B cell (primary cell): ENCODE measurements at regions of chr3 and their contacts with region 1.

Region 1: DNA sequence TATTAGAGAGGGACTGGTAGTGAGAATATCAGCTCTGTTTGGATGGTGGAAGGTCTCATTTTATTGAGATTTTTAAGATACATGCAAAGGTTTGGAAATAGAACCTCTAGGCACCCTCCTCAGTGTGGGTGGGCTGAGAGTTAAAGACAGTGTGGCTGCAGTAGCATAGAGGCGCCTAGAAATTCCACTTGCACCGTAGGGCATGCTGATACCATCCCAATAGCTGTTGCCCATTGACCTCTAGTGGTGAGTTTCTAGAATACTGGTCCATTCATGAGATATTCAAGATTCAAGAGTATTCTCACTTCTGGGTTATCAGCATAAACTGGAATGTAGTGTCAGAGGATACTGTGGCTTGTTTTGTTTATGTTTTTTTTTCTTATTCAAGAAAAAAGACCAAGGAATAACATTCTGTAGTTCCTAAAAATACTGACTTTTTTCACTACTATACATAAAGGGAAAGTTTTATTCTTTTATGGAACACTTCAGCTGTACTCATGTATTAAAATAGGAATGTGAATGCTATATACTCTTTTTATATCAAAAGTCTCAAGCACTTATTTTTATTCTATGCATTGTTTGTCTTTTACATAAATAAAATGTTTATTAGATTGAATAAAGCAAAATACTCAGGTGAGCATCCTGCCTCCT is 87.2 kb downstream of the TGFBR2 start:
- DNase-seq: peak; percentile 77
- ATAC-seq: peak; percentile 87
- H3K4me3 ChIP-seq: no peak overlapping the region
- H3K4me3 Mint-ChIP-seq: no peak overlapping the region
- H3K27ac ChIP-seq: peak overlapping the region in 1 of 2 donors; percentile 48
- H3K27ac Mint-ChIP-seq: peak overlapping the region; percentile 80
- H3K4me1 ChIP-seq: peaks cover 29 to 32% of the 10 kb centered on the region in 2 donors
- H3K4me1 Mint-ChIP-seq: peaks cover 74% of the 10 kb centered on the region
- H3K27me3 ChIP-seq: no peaks in the 10 kb centered on the region
- H3K27me3 Mint-ChIP-seq: no peaks in the 10 kb centered on the region
- CTCF ChIP-seq: peak; percentile 96

Region 2: GRCh38 chr3:30042274-30042859 is 651.2 kb before region 1 on chr3:
- CTCF ChIA-PET with region 1: interaction called, 39 read pairs
- POLR2A ChIA-PET with region 1: no interaction called
- intact Hi-C with region 1: loop called (anchors 1 kb)
- DNase-seq: peak; percentile 65
- ATAC-seq: peak; percentile 33
- H3K4me3 ChIP-seq: no peak overlapping the region
- H3K4me3 Mint-ChIP-seq: no peak overlapping the region
- H3K27ac ChIP-seq: no peak overlapping the region
- H3K27ac Mint-ChIP-seq: no peak overlapping the region
- H3K4me1 ChIP-seq: no peaks in the 10 kb centered on the region
- H3K4me1 Mint-ChIP-seq: peaks cover 2% of the 10 kb centered on the region
- H3K27me3 ChIP-seq: no peaks in the 10 kb centered on the region
- H3K27me3 Mint-ChIP-seq: peaks cover 14% of the 10 kb centered on the region
- CTCF ChIP-seq: peak; percentile 85

Region 3: GRCh38 chr3:30199096-30199759 is 494.4 kb before region 1 on chr3:
- CTCF ChIA-PET with region 1: interaction called, 113 read pairs
- POLR2A ChIA-PET with region 1: no interaction called
- intact Hi-C with region 1: loop called (anchors 1 kb)
- DNase-seq: peak; percentile 65
- ATAC-seq: peak; percentile 43
- H3K4me3 ChIP-seq: no peak overlapping the region
- H3K4me3 Mint-ChIP-seq: no peak overlapping the region
- H3K27ac ChIP-seq: no peak overlapping the region
- H3K27ac Mint-ChIP-seq: no peak overlapping the region
- H3K4me1 ChIP-seq: peaks cover 0 to 3% of the 10 kb centered on the region in 2 donors
- H3K4me1 Mint-ChIP-seq: peaks cover 15% of the 10 kb centered on the region
- H3K27me3 ChIP-seq: no peaks in the 10 kb centered on the region
- H3K27me3 Mint-ChIP-seq: no peaks in the 10 kb centered on the region
- CTCF ChIP-seq: peak; percentile 96

Region 4: DNA sequence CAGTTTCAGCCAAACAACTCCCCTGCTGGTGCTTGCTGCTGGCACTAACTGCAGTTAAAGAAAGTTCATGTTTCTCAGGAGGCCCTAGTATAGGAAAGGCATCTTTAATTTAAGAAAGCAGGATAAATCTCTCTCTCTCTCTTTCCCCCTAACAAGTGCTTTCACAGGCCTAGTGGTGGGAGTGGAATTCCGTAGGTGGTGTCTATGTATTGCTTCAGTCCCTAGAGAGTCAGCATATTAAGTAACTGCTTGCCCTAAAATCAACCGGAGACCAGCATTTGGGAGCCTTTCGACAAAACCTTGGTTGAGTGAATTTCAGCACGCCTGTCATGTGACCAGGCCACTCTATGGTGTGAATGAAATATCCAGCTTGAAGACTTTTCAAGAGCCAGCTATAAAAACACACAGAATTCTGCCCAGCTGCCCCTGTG is 256.4 kb before region 1 on chr3:
- CTCF ChIA-PET with region 1: interaction called, 3 read pairs
- POLR2A ChIA-PET with region 1: no interaction called
- intact Hi-C with region 1: loop called (anchors 5 kb)
- DNase-seq: no peak
- ATAC-seq: no peak
- H3K4me3 ChIP-seq: no peak overlapping the region
- H3K4me3 Mint-ChIP-seq: no peak overlapping the region
- H3K27ac ChIP-seq: no peak overlapping the region
- H3K27ac Mint-ChIP-seq: no peak overlapping the region
- H3K4me1 ChIP-seq: peaks cover 28 to 42% of the 10 kb centered on the region in 2 donors
- H3K4me1 Mint-ChIP-seq: peaks cover 37% of the 10 kb centered on the region
- H3K27me3 ChIP-seq: no peaks in the 10 kb centered on the region
- H3K27me3 Mint-ChIP-seq: no peaks in the 10 kb centered on the region
- CTCF ChIP-seq: no peak

Region 5: GRCh38 chr3:30613133-30613825 is 80.3 kb before region 1 on chr3:
- CTCF ChIA-PET with region 1: interaction called, 17 read pairs
- POLR2A ChIA-PET with region 1: no interaction called
- intact Hi-C with region 1: no loop called
- DNase-seq: no peak
- ATAC-seq: no peak
- H3K4me3 ChIP-seq: peak overlapping the region in 1 of 5 experiments; percentile 98
- H3K4me3 Mint-ChIP-seq: peak overlapping the region; percentile 92
- H3K27ac ChIP-seq: peak overlapping the region; percentile 17 to 79
- H3K27ac Mint-ChIP-seq: peak overlapping the region; percentile 33
- H3K4me1 ChIP-seq: peaks cover 84 to 95% of the 10 kb centered on the region in 2 donors
- H3K4me1 Mint-ChIP-seq: peaks cover 91% of the 10 kb centered on the region
- H3K27me3 ChIP-seq: no peaks in the 10 kb centered on the region
- H3K27me3 Mint-ChIP-seq: no peaks in the 10 kb centered on the region
- CTCF ChIP-seq: no peak

Region 6: GRCh38 chr3:30658328-30659052 is 35.1 kb before region 1 on chr3:
- CTCF ChIA-PET with region 1: interaction called, 10 read pairs
- POLR2A ChIA-PET with region 1: no interaction called
- intact Hi-C with region 1: loop called (anchors 5 kb)
- DNase-seq: peak; percentile 74
- ATAC-seq: peak; percentile 83
- H3K4me3 ChIP-seq: peak overlapping the region in 2 of 5 experiments; percentile 2 to 23
- H3K4me3 Mint-ChIP-seq: peak overlapping the region; percentile 69
- H3K27ac ChIP-seq: peak overlapping the region; percentile 56 to 82
- H3K27ac Mint-ChIP-seq: peak overlapping the region; percentile 87
- H3K4me1 ChIP-seq: peaks cover 85 to 97% of the 10 kb centered on the region in 2 donors
- H3K4me1 Mint-ChIP-seq: peaks cover 93% of the 10 kb centered on the region
- H3K27me3 ChIP-seq: no peaks in the 10 kb centered on the region
- H3K27me3 Mint-ChIP-seq: no peaks in the 10 kb centered on the region
- CTCF ChIP-seq: no peak